IMR-90 (cell line): ENCODE measurements at regions of chr4 and their contacts with region 1.

Region 1: DNA sequence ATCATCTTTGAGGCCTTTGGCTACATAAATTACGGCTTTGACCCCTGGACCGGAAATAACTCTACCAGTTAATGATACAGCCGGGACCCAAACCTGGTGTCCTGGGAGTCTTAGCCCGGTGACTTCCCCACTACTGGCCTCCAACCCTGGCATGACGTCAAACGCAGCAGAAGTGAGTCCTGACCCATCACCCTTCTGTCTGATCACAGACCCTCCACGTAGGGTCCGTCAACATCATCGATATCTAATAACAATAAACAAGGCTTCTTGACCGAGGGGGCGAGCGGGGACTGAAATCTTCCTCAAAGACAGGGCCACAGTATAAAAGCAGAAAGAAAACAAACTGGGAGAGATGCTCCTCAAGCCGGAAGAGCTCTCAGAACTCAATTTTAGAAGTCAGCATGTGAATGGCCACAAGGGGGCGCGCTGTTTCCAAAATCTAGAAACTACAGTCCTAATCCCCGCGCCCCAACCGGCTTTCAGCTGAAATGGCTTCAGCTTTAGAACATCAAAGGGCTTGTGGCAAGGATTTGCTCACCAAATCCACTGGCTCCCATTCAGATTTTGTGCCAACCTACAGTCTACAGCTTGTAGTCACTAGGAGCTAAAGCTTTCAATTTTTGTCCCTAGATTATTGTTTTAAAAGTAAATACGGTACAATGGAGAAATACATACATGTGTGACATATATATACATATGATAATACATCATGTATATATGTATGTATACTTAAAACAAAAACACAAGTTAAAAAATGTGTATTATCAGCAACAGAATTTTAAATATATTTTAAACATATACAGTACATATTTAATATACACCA is 46.4 kb upstream of the ENPP6 start:
- DNase-seq: peak; percentile 90
- ATAC-seq: peak; percentile 74
- H3K4me3 ChIP-seq: no peak overlapping the region
- H3K27ac ChIP-seq: no peak overlapping the region
- H3K4me1 ChIP-seq: peaks cover 14% of the 10 kb centered on the region
- H3K27me3 ChIP-seq: no peaks in the 10 kb centered on the region
- CTCF ChIP-seq: peak; percentile 91
- POLR2A ChIP-seq: no peak
- RAD21 ChIP-seq: peak; percentile 82

Region 2: DNA sequence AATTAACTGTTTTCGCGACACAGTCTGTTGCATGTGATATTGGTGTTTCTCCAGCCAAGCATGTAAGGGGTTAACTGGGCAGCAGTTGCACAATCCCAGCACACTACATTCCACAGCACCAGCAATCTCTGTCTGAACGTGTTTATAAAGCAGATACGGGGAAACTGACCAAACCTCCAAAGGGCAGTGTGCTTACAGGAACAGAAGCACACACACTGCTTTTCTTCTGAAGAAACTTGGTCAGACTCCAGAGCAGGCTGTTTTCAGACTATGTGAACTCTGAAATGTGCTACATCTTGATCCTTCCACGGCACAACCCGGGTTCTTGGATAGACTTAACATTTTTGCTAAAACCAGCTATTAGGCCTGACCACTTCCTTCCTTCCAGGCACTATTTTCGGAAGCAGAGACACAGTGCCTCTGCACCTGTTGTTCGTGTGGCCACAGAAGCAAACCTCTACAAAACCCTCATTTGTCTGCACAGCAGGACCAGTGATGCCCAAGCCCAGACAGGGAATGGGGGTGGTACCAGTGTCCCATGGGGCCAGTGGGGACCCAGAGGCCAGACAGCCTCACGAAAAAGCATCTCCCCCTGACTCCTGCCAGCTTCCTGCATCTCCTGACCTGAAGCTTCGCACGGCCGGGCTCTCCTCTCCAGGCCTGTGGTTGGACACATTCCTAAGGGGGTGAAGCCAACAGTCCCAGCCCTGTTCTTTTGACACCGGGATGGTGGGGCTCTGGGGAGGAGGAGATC is 120.1 kb after region 1 on chr4:
- CTCF ChIA-PET with region 1: interaction called, 4 read pairs
- POLR2A ChIA-PET with region 1: interaction called, 3 read pairs
- dilution Hi-C with region 1: no loop called
- in situ Hi-C with region 1: no loop called
- intact Hi-C with region 1: loop called (anchors 2 kb)
- DNase-seq: peak; percentile 96
- ATAC-seq: peak; percentile 78
- H3K4me3 ChIP-seq: peak overlapping the region; percentile 17; the same call in 1 of the 2 replicates
- H3K27ac ChIP-seq: peak overlapping the region; percentile 92
- H3K4me1 ChIP-seq: peaks cover 27% of the 10 kb centered on the region
- H3K27me3 ChIP-seq: no peaks in the 10 kb centered on the region
- CTCF ChIP-seq: no peak
- POLR2A ChIP-seq: peak; percentile 41; the same call in 1 of the 2 replicates
- RAD21 ChIP-seq: 0 out of 2 replicates have a peak, but pooled peaks have one; percentile 3

Region 3: DNA sequence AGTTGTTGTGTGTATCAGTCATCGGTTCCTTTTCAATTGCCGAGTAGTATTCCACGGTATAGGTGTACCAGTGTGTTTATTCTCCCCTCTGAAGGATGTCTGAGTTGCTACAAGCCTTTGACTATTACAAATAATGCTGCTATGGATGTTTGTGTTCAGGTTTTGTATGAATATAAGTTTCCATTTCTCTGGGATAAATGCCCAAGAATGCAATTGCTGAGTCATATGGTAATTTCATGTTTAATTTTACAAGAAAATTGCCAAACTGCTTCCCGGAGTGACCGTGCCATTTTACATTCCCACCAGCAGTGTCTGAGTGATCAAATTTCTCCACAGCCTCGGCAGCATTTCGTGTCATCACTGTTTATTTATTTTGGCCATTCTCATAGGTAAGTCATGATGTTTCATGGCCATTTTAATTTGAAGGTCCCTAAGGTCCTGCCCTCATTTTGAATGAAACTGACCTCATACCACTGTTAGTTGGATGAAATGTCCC is 136.3 kb after region 1 on chr4:
- CTCF ChIA-PET with region 1: no interaction called
- POLR2A ChIA-PET with region 1: no interaction called
- dilution Hi-C with region 1: no loop called
- in situ Hi-C with region 1: no loop called
- intact Hi-C with region 1: loop called (anchors 5 kb)
- DNase-seq: peak; percentile 97
- ATAC-seq: peak; percentile 83
- H3K4me3 ChIP-seq: no peak overlapping the region
- H3K27ac ChIP-seq: peak overlapping the region; percentile 86; the same call in 1 of the 2 replicates
- H3K4me1 ChIP-seq: peaks cover 13% of the 10 kb centered on the region
- H3K27me3 ChIP-seq: no peaks in the 10 kb centered on the region
- CTCF ChIP-seq: peak; percentile 55
- POLR2A ChIP-seq: no peak
- RAD21 ChIP-seq: peak; percentile 31; the same call in 1 of the 2 replicates

Region 4: GRCh38 chr4:184733654-184734524 is 469.8 kb after region 1 on chr4 and contains the start of gene CENPU:
- CTCF ChIA-PET with region 1: interaction called, 3 read pairs
- POLR2A ChIA-PET with region 1: no interaction called
- dilution Hi-C with region 1: no loop called
- in situ Hi-C with region 1: no loop called
- intact Hi-C with region 1: loop called (anchors 5 kb)
- DNase-seq: peak; percentile 98
- ATAC-seq: peak; percentile 98
- H3K4me3 ChIP-seq: peak within 1 kb of the TSS; percentile 74
- H3K27ac ChIP-seq: peak within 1 kb of the TSS; percentile 11; the same call in 1 of the 2 replicates
- H3K4me1 ChIP-seq: peaks cover 4% of the 10 kb centered on the region
- H3K27me3 ChIP-seq: no peaks in the 10 kb centered on the region
- CTCF ChIP-seq: no peak
- POLR2A ChIP-seq: no peak; the same call in 1 of the 2 replicates
- RAD21 ChIP-seq: no peak
- total RNA-seq, gene CENPU: 13.6 and 26.7 TPM in 2 replicates

Region 5: GRCh38 chr4:184825896-184826690 is 562.0 kb after region 1 on chr4 and contains the start of gene ACSL1:
- CTCF ChIA-PET with region 1: no interaction called
- POLR2A ChIA-PET with region 1: no interaction called
- dilution Hi-C with region 1: no loop called
- in situ Hi-C with region 1: no loop called
- intact Hi-C with region 1: loop called (anchors 5 kb)
- DNase-seq: peak; percentile 53
- ATAC-seq: peak; percentile 97
- H3K4me3 ChIP-seq: peak within 1 kb of the TSS; percentile 84
- H3K27ac ChIP-seq: no peak within 1 kb of the TSS; the same call in 1 of the 2 replicates
- H3K4me1 ChIP-seq: peaks cover 2% of the 10 kb centered on the region; the same call in 1 of the 2 replicates
- H3K27me3 ChIP-seq: peaks cover 5% of the 10 kb centered on the region; the same call in 1 of the 2 replicates
- CTCF ChIP-seq: 0 out of 2 replicates have a peak, but pooled peaks have one; percentile 9
- POLR2A ChIP-seq: peak; percentile 90
- RAD21 ChIP-seq: no peak
- total RNA-seq, gene ACSL1: 26.0 and 27.5 TPM in 2 replicates